ENCODE measurements at regions of chr6 and their contacts with region 1.

Region 1: GRCh38 chr6:15014987-15015386 is 230.9 kb upstream of the JARID2 start:
- DNase-seq: no peak
- ATAC-seq: no peak
- H3K4me3 ChIP-seq: no peak overlapping the region
- H3K27ac ChIP-seq: no peak overlapping the region
- H3K4me1 ChIP-seq: no peaks in the 10 kb centered on the region
- H3K27me3 ChIP-seq: no peaks in the 10 kb centered on the region
- CTCF ChIP-seq: no peak
- EP300 ChIP-seq: no peak
- POLR2A ChIP-seq: no peak
- RAD21 ChIP-seq: no peak

Region 2: DNA sequence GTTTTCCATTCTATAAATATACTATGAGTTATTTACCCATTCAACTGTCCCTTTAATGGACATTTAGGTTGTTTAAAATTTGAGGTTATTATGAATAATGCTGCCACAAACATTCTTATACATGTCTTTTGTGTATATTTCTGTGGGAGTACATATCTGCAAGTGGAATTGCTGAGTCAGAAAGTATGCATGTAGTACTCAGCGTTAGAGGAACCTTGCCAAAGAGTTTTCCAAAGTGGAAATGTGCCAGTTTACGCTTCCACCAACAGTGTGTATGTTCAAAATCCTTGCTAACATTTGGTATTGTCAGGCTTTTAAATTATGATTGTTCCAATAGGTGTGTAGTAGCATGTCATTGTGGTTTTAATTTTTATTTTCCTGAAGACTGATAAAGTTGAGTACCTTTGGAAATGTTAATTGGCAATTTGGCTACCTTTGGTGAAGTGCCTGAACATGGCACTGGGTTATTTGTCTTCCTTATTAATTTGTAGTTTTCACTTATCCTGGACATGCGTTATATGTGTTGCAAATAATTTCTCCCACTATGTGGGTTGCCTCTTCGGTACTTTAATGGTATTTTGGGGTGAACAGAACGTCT is 556.2 kb before region 1 on chr6:
- CTCF ChIA-PET with region 1: no interaction called
- POLR2A ChIA-PET with region 1: no interaction called
- in situ Hi-C with region 1: no loop called
- intact Hi-C with region 1: loop called (anchors 5 kb)
- DNase-seq: no peak
- ATAC-seq: no peak
- H3K4me3 ChIP-seq: no peak overlapping the region
- H3K27ac ChIP-seq: no peak overlapping the region
- H3K4me1 ChIP-seq: no peaks in the 10 kb centered on the region
- H3K27me3 ChIP-seq: 0 out of 5 replicates have a peak, but pooled peaks cover 0 to 1% of the 10 kb centered on the region in 2 experiments
- CTCF ChIP-seq: no peak
- EP300 ChIP-seq: no peak
- POLR2A ChIP-seq: no peak
- RAD21 ChIP-seq: no peak